Panc1 (cell line): ENCODE measurements at regions of chr6 and their contacts with region 1.

Region 1: DNA sequence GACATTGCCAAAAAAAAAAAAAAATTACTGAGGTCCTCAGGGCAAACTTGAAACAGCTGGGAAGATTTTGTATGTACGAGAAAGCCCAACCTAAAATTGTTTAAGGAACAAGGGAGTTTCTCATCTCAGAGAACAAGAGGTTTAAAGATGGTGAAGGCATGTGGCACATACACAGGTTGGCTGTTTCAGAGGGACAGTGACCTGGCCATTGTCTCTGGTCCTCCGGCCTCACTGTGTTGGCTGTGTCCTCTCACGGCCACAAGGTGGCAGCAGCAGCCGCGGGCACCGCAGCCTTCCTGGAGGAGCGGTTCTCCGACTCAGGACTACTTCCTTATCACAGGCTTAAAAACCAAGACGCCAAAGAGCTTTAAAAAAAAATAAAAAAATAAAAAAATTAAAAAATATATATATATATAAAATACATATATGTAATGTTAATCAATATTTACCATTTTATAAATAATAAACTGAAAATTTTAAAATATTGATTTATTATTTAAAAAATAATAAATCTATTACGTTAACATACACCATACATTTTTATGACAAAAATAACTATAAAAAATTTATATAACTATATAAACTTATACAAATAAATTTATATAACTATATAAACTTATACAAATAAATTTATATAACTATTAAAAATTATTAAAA is 52.8 kb downstream of the GTF2H5 start:
- DNase-seq: no peak
- ATAC-seq: peak; percentile 99
- H3K4me3 ChIP-seq: no peak overlapping the region
- H3K27ac ChIP-seq: no peak overlapping the region
- H3K4me1 ChIP-seq: no peaks in the 10 kb centered on the region
- H3K27me3 ChIP-seq: no peaks in the 10 kb centered on the region
- CTCF ChIP-seq: peak; percentile 95

Region 2: GRCh38 chr6:158518191-158519127 is 297.5 kb after region 1 on chr6:
- CTCF ChIA-PET with region 1: interaction called, 7 read pairs
- POLR2A ChIA-PET with region 1: no interaction called
- in situ Hi-C with region 1: no loop called
- intact Hi-C with region 1: loop called (anchors 5 kb)
- DNase-seq: peak; percentile 76
- ATAC-seq: peak; percentile 93
- H3K4me3 ChIP-seq: peak overlapping the region; percentile 39 to 60
- H3K27ac ChIP-seq: peak overlapping the region; percentile 63
- H3K4me1 ChIP-seq: peaks cover 14% of the 10 kb centered on the region
- H3K27me3 ChIP-seq: no peaks in the 10 kb centered on the region
- CTCF ChIP-seq: peak; percentile 81

Region 3: GRCh38 chr6:158595223-158595622 is 374.3 kb after region 1 on chr6:
- CTCF ChIA-PET with region 1: no interaction called
- POLR2A ChIA-PET with region 1: no interaction called
- in situ Hi-C with region 1: no loop called
- intact Hi-C with region 1: loop called (anchors 5 kb)
- DNase-seq: no peak
- ATAC-seq: no peak
- H3K4me3 ChIP-seq: no peak overlapping the region
- H3K27ac ChIP-seq: no peak overlapping the region
- H3K4me1 ChIP-seq: no peaks in the 10 kb centered on the region
- H3K27me3 ChIP-seq: no peaks in the 10 kb centered on the region
- CTCF ChIP-seq: no peak